Left cardiac atrium (tissue), 4 donors: ENCODE measurements at regions of chr4 and their contacts with region 1.

Region 1: DNA sequence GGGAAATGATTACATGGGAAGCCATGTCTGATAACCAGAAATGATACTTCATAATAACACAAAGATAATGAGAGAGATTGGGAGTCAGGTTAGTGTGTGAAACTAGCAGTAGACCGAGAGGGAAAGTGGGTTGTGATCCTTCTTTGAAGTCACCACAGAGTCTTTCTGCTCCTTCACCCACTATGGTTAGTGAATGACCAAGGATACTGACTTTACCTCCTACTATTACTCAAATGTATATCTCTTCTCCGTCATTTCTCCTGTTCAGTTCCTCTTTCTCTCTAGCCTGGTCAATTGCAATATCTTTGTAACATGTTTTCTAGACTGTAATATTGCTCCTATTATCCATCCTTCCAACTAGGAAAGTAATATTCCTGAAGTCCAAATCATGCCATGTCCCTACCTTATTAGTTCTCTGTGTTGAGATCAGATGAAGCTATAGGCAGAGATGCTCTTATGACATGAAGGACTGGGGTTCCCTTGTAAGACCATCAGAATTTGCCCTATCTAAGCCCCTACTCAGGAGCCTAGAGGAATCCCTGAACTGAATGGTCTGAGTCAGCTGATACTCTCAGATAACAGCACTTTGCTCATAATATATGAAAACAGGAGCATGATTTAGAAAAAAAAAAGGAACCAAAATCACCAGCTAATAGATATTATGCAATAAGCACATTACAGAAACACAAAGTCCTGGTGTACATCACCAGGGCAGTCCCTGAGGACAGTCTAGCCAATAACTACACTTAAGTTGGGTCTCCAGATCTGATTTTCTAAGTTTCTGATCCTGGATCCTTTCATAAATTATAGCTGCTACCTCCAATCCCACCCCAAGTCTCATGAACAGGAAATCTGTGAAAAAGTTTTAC is 81.2 kb downstream of the SHROOM3 start:
- DNase-seq: no peak
- ATAC-seq: no peak

Region 2: DNA sequence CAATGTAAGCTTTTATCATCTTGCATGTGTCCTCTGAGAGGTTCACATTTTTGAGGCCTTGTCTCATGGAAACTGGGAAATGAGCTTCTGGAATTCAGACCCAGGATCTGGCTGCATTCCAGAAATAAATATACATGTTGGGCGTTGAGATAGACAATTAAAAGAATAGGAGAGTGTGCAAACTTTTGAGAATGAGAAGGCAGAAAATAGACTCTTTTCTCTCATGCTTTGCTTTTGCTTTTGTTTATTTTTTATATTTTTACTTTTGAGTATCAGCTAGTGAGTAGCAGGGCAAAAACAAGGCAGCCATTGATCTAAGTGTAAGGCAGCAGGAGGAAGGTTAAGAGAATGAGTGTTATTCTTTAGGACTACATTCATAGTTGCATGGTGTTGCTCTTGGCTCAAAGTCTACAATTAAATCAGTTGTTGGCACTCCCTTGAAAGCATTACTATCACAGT is 68.8 kb before region 1 on chr4:
- intact Hi-C with region 1: no loop called
- DNase-seq: no peak
- ATAC-seq: peak in 1 of 2 donors; percentile 33

Region 3: DNA sequence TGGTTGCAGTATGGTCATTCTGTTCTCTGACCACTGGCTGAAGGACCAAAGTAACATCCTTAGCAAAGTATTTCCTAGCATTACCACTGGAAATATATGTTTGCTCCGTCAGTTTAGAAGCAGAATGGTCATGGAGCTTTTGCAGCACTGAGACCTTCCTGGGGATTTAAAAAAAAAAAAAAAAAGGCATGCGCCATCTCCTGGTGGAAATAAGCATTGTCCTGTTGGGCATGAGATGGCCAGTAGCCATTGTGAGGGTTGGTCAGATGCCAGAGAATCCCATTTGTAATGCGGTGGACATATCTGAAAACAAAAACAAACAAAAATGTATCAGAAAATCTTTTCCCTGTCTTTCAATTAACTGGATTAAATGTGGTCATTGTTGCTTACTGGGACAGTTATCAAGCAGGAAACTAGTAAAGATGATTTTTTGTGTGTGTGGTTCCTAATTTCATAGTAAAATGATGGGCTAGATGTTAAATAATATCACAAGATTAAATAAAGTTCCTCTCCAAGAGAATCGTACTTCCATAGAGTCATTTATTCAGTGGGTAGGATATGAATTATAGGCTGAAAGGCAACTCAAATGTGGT is 242.2 kb after region 1 on chr4:
- intact Hi-C with region 1: loop called (anchors 2 to 5 kb)
- DNase-seq: no peak
- ATAC-seq: peak; percentile 63 to 71

Region 4: GRCh38 chr4:76781698-76782595 is 265.7 kb after region 1 on chr4:
- intact Hi-C with region 1: no loop called
- DNase-seq: no peak
- ATAC-seq: no peak

Region 5: GRCh38 chr4:77044461-77045150 is 528.4 kb after region 1 on chr4:
- intact Hi-C with region 1: loop called in 1 of 2 experiments (anchors 10 kb)
- DNase-seq: no peak
- ATAC-seq: peak; percentile 25 to 43

Region 6: DNA sequence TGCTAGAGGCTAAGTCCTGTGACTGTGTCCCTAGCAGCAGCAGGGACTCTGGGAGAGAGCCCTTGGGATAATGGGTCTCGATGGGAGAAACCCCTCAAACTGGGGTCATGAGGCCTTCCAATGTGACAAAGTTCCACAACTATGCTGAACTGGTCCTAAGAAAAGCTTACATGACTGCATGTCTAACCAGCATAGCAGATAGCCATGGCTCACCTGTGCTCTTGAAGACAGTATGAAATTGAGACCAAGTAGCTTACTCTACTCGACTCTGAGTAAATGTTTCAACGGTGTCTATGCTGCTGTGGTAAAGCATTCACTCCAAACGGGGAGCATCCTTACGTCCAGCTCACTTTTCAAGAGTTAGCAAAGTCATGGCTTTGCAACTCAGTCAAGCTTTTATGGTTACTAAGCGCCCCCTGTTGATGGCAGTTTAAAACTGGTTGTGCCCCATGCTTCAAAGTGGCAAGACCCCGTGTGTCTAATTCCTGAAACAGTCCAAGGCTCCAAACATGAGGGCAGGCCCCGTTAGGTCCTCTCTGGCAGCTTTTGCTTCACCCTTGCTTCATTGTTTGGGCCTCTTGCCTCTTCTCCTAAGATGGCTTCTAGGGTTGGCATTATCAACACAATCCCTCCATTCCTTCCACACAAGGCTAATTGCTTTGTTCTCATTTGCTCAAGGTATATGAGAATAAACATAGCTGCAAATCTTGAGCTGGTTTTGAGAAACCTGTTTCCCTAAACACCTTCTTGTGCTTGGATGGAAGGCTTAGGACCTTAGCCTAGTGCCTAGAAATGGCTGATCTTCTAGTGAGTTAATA is 687.4 kb after region 1 on chr4:
- intact Hi-C with region 1: loop called in 1 of 2 experiments (anchors 2 kb)
- DNase-seq: peak; percentile 41
- ATAC-seq: peak; percentile 73 to 86